Body of pancreas (tissue), 4 donors: ENCODE measurements at regions of chr18 and their contacts with region 1.

Region 1: DNA sequence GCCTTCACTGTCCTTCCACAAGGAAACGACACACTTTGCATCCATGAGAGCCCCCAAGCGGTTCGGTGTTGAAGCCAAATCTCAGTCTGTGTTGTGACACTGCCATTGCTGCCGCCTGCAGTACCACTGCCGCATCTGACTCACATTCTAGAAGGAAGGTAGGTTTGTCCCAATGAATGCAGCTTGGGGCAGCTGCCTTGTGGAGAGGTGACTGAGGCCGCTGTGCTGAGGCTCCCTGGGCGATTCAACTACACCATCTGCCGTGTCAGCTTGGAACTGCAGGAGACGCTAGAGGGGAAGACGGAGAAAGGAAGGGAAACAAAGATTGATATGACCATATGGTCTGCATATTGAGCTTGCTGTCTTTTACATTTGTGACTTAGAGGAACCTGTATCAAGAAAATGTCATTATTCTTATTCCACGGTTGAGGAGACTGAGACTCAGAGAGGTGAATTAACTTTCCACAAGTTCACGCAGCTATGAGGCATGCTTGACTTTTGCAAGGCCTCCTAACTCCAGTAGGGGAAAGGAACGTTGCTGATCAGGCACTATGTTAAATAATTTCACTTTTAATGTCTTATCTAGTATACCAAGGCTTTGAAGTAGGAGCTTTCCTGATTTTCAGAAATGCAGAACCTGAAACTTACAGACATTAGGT is 43.5 kb upstream of the LMAN1 start:
- DNase-seq: peak; percentile 81 to 86 (median 84)
- ATAC-seq: peak; percentile 99
- H3K4me3 ChIP-seq: no peak overlapping the region
- H3K27ac ChIP-seq: no peak overlapping the region
- H3K4me1 ChIP-seq: no peaks in the 10 kb centered on the region
- H3K27me3 ChIP-seq: no peaks in the 10 kb centered on the region
- CTCF ChIP-seq: peak; percentile 82 to 99 (median 95)
- POLR2A ChIP-seq: no peak

Region 2: GRCh38 chr18:58754544-58755068 is 648.0 kb before region 1 on chr18:
- intact Hi-C with region 1: no loop called
- DNase-seq: peak in 1 of 4 donors; percentile 33
- ATAC-seq: no peak
- H3K4me3 ChIP-seq: no peak overlapping the region
- H3K27ac ChIP-seq: no peak overlapping the region
- H3K4me1 ChIP-seq: no peaks in the 10 kb centered on the region
- H3K27me3 ChIP-seq: no peaks in the 10 kb centered on the region
- CTCF ChIP-seq: no peak
- POLR2A ChIP-seq: no peak

Region 3: GRCh38 chr18:59249205-59249774 is 153.3 kb before region 1 on chr18:
- intact Hi-C with region 1: loop called (anchors 5 kb)
- DNase-seq: peak; percentile 54 to 73 (median 68)
- ATAC-seq: peak; percentile 76
- H3K4me3 ChIP-seq: no peak overlapping the region
- H3K27ac ChIP-seq: no peak overlapping the region
- H3K4me1 ChIP-seq: no peaks in the 10 kb centered on the region
- H3K27me3 ChIP-seq: no peaks in the 10 kb centered on the region
- CTCF ChIP-seq: peak; percentile 40 to 74 (median 68)
- POLR2A ChIP-seq: no peak

Region 4: GRCh38 chr18:59308248-59308937 is 94.2 kb before region 1 on chr18:
- intact Hi-C with region 1: loop called (anchors 5 kb)
- DNase-seq: peak; percentile 73 to 84 (median 75)
- ATAC-seq: peak; percentile 97
- H3K4me3 ChIP-seq: no peak overlapping the region
- H3K27ac ChIP-seq: no peak overlapping the region
- H3K4me1 ChIP-seq: peaks cover 13% of the 10 kb centered on the region
- H3K27me3 ChIP-seq: peaks cover 0 to 7% of the 10 kb centered on the region in 2 donors
- CTCF ChIP-seq: peak; percentile 75 to 90 (median 83)
- POLR2A ChIP-seq: no peak

Region 5: GRCh38 chr18:59582395-59582794 is 179.8 kb after region 1 on chr18:
- intact Hi-C with region 1: no loop called
- DNase-seq: no peak
- ATAC-seq: no peak
- H3K4me3 ChIP-seq: no peak overlapping the region
- H3K27ac ChIP-seq: no peak overlapping the region
- H3K4me1 ChIP-seq: no peaks in the 10 kb centered on the region
- H3K27me3 ChIP-seq: no peaks in the 10 kb centered on the region
- CTCF ChIP-seq: no peak
- POLR2A ChIP-seq: no peak